ENCODE measurements at regions of chr4 and their contacts with region 1.

Region 1: GRCh38 chr4:153344131-153345010 is at the start of gene MND1:
- DNase-seq: peak; percentile 22 to 88
- H3K4me3 ChIP-seq: peak within 1 kb of the TSS; percentile 67 to 87
- H3K27ac ChIP-seq: peak within 1 kb of the TSS in 1 of 2 donors; percentile 17
- H3K4me1 ChIP-seq: peaks cover 0 to 4% of the 10 kb centered on the region in 2 donors
- H3K27me3 ChIP-seq: no peaks in the 10 kb centered on the region
- CTCF ChIP-seq: peak; percentile 81 to 99 (median 97)
- total RNA-seq, gene MND1: not detected

Region 2: GRCh38 chr4:153432968-153433753 is 88.8 kb after region 1 on chr4:
- intact Hi-C with region 1: loop called (anchors 5 kb)
- DNase-seq: peak in 1 of 2 donors; percentile 75
- H3K4me3 ChIP-seq: peak overlapping the region; percentile 12 to 13
- H3K27ac ChIP-seq: peak overlapping the region in 1 of 2 donors; percentile 0
- H3K4me1 ChIP-seq: peaks cover 0 to 10% of the 10 kb centered on the region in 2 donors
- H3K27me3 ChIP-seq: no peaks in the 10 kb centered on the region
- CTCF ChIP-seq: peak; percentile 28 to 50 (median 50)

Region 3: DNA sequence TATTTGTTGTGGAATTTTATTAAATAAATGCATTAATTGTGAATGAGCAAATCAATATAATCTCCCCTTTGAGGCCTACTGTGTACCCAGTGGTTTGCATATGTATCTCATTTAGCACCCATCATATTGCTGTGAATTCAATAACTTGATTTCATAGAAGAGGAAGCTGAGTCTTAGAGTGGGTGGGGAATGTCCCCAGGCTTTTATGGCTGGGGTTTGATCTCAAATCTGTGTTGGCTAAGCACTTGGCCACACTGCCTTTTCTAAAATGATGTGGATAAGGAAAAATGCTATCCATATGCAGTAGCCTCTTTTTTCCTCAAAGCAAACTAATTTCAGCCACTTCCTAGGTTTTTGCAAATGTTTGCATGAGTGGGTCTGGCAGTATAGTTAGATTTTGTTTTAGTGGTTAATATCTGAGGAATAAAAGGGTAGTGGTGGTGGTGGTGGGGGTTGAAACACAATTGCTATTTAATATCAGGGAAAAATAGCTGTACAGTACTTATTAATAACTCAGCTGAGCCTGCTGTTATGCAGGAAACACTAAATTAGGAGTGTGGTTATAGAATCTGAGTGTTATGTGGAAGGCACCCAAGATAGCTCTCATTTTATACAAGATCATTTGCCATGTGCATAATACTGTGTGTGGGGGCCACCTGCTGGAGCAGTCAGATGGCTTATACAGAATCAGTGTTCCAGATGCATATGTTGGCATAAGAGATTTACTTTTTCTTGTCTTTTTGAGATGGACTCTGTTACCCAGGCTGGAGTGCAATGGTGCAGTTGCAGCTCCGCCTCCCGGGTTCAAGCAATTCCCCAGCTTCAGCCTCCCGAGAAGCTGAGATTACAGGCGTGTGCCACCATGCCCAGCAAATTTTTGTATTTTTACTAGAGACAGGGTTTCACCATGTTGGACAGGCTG is 229.8 kb after region 1 on chr4:
- intact Hi-C with region 1: loop called (anchors 1 kb)
- DNase-seq: peak in 1 of 2 donors; percentile 83
- H3K4me3 ChIP-seq: no peak overlapping the region
- H3K27ac ChIP-seq: no peak overlapping the region
- H3K4me1 ChIP-seq: peaks cover 3 to 10% of the 10 kb centered on the region in 2 donors
- H3K27me3 ChIP-seq: no peaks in the 10 kb centered on the region
- CTCF ChIP-seq: peak; percentile 63 to 79 (median 63)

Region 4: DNA sequence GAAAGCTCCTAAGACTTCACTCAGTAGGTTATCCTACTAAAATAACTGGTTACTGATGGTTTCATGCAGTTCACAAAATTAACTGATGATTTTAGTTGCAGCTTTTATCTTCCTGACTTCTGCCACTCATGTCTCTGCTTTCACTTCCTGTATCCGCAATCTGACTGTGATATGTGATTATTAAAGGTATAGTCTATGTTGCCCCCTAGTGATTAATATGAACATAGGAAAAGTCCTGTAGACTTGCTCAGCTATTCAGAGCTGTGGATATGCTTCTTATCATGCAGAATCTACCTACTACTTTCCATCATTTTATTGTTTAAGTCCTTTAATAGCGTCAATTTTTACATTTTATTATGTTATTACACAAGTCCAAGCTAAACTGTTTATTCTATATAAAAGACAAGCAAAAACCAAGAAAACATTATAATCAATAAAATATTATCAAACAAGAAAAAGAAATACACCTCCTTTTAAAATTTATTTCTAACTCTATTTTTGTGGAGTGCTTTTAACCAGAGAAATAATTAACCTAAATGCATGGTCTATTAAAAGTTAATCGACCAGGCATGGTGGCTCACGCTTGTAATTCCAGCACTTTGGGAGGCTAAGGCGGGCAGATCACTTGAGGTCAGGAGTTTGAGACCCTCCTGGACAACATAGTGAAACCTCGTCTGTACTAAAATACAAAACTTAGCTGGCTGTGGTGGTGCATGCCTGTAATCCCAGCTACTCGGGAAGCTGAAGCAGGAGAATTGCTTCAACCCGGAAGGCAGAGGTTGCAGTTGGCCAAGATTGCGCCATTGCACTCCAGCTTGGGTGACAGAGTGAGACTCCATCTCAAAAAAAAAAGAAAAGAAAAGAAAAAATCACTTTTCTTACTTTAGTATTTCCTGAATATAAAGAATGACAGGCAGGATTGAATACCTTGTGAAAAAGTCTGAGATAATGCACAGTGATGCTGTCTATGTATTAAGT is 299.3 kb after region 1 on chr4:
- intact Hi-C with region 1: loop called (anchors 5 kb)
- DNase-seq: no peak
- H3K4me3 ChIP-seq: no peak overlapping the region
- H3K27ac ChIP-seq: no peak overlapping the region
- H3K4me1 ChIP-seq: peaks cover 0 to 11% of the 10 kb centered on the region in 2 donors
- H3K27me3 ChIP-seq: no peaks in the 10 kb centered on the region
- CTCF ChIP-seq: peak in 2 of 3 experiments; percentile 11 to 23

Measured in ascending aorta (tissue), 2 donors.